Right cardiac atrium (tissue), 5 donors: ENCODE measurements at regions of chr17 and their contacts with region 1.

Region 1: DNA sequence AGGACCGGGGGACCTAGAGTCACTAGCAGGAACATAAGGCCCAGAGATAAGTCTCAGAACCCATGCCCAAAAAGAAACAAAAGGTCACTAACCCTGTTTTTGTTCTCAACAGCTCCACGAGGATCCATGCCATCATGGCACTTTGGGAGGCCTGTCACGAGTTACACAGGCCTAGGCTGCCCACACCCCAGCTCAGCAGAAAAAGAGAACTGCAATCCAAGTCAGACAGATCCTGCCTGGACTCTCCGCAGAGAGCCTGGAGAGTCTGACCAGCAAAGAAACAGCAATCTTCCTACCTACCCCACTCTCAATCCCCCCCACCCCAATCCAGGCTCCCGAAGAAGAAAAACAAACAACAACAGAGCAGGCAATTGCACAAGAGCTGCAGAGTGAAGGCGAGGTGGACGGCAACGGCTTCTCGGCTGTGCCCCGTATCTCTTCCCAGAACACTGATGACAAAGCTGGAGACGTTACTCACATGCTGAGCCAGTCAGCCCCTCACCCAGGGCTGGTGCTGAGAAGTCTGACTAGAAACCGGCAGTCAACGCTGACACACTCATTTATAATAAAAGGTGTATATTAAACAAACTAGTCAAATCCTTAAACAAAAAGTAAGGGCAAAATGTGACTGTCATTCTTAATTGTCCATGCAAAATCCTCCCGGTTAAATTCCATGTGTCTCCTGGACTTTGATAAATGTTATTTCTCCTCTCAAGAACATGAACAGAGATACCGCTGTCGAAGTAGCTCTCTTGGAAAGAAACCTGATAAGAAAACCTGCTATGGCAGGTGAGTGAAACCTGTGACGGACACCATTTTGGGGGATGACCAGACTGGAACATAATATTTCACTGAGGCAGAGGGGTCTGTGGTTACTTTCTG is 89.3 kb downstream of the SMG6 start:
- DNase-seq: peak; percentile 68 to 85 (median 81)
- ATAC-seq: peak; percentile 82 to 86
- H3K4me3 ChIP-seq: no peak overlapping the region
- H3K27ac ChIP-seq: peak overlapping the region; percentile 99
- H3K4me1 ChIP-seq: peaks cover 10% of the 10 kb centered on the region
- H3K27me3 ChIP-seq: no peaks in the 10 kb centered on the region

Region 2: DNA sequence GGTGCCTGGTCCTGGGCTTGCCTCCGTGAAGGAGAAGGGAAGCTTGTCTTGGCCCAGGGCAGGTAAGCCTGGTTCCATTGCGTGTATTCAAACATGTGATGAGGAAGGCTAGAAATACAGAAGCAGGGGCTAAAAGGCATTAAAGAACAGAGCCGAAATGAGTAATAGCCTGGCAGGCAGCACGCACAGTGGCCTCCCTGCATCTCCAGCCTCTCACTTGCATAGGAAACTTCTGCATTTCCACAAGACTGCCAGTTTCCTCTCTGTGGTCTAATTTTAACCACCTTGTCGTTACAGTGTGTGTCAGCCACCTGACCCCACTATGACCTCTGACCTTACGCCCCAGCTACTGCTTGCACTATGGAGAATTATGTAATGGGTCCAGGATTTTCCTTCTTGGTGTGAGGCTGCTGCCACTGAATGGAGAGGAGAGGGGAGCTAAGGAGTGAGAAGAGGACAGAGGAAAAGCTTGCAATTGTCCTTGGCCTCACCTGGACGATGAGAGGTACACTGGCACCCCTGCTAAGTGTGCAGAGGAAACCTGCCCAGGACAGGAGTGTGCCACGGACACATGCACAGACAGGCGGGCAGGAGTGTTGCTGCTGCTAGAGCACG is 126.6 kb before region 1 on chr17:
- intact Hi-C with region 1: no loop called
- DNase-seq: peak in 2 of 3 donors; percentile 51 to 75
- ATAC-seq: peak in 1 of 2 donors; percentile 0
- H3K4me3 ChIP-seq: no peak overlapping the region
- H3K27ac ChIP-seq: peak overlapping the region; percentile 82
- H3K4me1 ChIP-seq: peaks cover 57% of the 10 kb centered on the region
- H3K27me3 ChIP-seq: no peaks in the 10 kb centered on the region

Region 3: GRCh38 chr17:2172077-2172851 is 42.0 kb before region 1 on chr17:
- intact Hi-C with region 1: loop called in 3 of 4 experiments (anchors 2 to 5 kb)
- DNase-seq: peak; percentile 76 to 92 (median 90)
- ATAC-seq: peak; percentile 84 to 86
- H3K4me3 ChIP-seq: peak overlapping the region; percentile 2
- H3K27ac ChIP-seq: peak overlapping the region; percentile 98
- H3K4me1 ChIP-seq: peaks cover 29% of the 10 kb centered on the region
- H3K27me3 ChIP-seq: no peaks in the 10 kb centered on the region